AG04449 (cell line): ENCODE measurements at regions of chr14 and their contacts with region 1.

Region 1: GRCh38 chr14:61837336-61838229 is 75.4 kb downstream of the SNAPC1 start:
- DNase-seq: no peak
- H3K4me3 ChIP-seq: no peak overlapping the region
- CTCF ChIP-seq: peak; percentile 88

Region 2: GRCh38 chr14:61443481-61443880 is 394.1 kb before region 1 on chr14:
- CTCF ChIA-PET with region 1: interaction called, 29 read pairs
- POLR2A ChIA-PET with region 1: no interaction called
- DNase-seq: no peak
- H3K4me3 ChIP-seq: no peak overlapping the region
- CTCF ChIP-seq: no peak

Region 3: DNA sequence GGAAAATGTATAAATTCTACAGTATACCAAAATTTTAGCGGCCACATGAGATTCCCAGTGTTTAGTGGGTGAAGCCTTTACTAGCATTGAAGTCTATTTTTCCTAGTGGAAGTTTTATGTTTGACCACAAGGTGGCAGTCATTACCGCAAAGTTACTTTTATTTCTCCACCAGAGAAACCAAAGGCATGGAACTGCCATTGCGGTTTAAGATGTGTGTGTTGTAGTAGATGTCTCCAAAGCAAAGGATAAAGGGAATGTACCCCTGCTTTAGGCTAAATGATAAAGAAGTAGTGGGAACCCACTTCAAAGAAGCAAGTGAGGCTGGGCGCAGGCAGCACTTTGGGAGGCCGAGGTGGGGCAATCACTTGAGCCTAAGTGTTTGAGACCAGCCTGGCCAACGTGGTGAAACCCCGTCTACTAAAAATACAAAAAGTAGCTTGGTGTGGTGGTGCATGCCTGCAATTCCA is 375.7 kb before region 1 on chr14:
- CTCF ChIA-PET with region 1: interaction called, 127 read pairs
- POLR2A ChIA-PET with region 1: no interaction called
- DNase-seq: no peak
- H3K4me3 ChIP-seq: no peak overlapping the region
- CTCF ChIP-seq: peak; percentile 30

Region 4: DNA sequence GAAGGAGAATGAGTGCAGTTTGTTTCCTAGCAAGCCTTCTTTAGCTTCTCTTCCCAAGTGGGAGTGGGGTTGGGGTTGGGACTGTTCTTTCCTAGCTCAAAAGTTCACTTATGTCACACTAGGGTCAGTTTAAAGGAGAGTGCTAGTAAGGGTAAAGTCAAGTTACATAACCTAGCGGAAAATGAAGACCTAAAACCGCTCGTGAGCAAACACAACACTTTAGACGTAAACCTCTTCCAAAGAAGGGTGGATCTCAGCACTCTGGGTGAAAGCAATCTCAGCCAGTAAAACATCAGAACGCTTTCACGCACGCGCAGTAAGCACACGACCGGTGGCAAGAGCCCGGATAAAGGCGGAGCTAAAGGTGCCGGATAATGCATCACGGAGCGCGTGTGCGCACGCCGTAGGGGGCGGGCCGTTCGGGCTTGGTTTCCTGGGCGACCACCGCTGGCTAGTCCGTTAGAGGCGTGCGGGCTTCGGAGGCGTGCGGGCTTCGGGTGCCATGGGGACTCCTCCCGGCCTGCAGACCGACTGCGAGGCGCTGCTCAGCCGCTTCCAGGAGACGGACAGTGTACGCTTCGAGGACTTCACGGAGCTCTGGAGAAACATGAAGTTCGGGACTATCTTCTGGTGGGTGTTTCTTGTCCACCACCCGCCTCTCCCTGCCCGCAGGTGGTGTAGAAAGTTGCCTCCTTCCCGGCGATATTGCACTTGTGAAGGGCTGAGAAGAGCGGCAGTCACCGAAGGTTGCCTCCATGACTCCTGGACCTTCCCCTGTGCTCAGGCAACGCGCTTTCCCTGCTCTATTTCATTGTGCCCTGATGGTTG is 75.4 kb before region 1 on chr14 and contains the start of gene SNAPC1:
- CTCF ChIA-PET with region 1: interaction called, 12 read pairs
- POLR2A ChIA-PET with region 1: no interaction called
- DNase-seq: peak; percentile 80
- H3K4me3 ChIP-seq: peak within 1 kb of the TSS; percentile 98
- CTCF ChIP-seq: no peak

Region 5: GRCh38 chr14:61822458-61822857 is 15.1 kb before region 1 on chr14:
- CTCF ChIA-PET with region 1: interaction called, 11 read pairs
- POLR2A ChIA-PET with region 1: no interaction called
- DNase-seq: no peak
- H3K4me3 ChIP-seq: no peak overlapping the region
- CTCF ChIP-seq: no peak

Region 6: DNA sequence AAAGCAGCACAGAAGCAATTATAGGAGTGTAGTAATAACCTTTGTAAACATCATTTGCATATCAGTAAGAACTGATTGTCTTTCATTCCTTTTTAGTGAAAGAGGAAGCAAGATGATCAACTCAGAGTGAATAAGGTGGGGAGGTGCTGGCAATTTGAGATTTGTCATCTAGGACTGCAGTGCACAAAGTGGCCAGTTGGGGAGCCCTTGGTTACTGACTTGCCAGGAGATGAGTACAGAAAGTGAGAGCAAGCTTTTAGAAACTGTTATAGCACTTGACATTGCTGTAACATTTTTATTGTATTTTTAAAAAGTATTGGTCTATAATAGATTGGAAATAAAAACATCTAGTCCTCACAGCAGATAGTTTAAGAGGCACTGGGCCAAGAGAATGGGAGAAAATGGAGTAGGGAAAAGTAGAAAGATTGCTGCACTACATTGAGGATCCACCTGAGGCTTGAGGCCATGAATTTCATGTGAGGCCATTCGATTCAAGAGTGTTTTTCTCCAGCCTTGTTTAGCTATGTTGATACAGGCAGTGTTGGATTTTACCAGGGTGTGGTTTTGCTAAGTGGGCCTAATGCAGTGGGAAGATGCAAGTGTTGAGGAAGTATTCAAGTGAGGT is 22.8 kb after region 1 on chr14:
- CTCF ChIA-PET with region 1: interaction called, 16 read pairs
- POLR2A ChIA-PET with region 1: no interaction called
- DNase-seq: no peak
- H3K4me3 ChIP-seq: no peak overlapping the region
- CTCF ChIP-seq: peak; percentile 69

Region 7: GRCh38 chr14:61899497-61899896 is 61.9 kb after region 1 on chr14:
- CTCF ChIA-PET with region 1: no interaction called
- POLR2A ChIA-PET with region 1: no interaction called
- DNase-seq: no peak
- H3K4me3 ChIP-seq: no peak overlapping the region
- CTCF ChIP-seq: no peak